OCI-LY7 (cell line): ENCODE measurements at regions of chr12 and their contacts with region 1.

Region 1: GRCh38 chr12:13079440-13079906 is 24.0 kb downstream of the GSG1 start:
- DNase-seq: no peak
- H3K4me3 ChIP-seq: no peak overlapping the region
- H3K27ac ChIP-seq: no peak overlapping the region
- H3K4me1 ChIP-seq: no peaks in the 10 kb centered on the region
- CTCF ChIP-seq: no peak

Region 2: DNA sequence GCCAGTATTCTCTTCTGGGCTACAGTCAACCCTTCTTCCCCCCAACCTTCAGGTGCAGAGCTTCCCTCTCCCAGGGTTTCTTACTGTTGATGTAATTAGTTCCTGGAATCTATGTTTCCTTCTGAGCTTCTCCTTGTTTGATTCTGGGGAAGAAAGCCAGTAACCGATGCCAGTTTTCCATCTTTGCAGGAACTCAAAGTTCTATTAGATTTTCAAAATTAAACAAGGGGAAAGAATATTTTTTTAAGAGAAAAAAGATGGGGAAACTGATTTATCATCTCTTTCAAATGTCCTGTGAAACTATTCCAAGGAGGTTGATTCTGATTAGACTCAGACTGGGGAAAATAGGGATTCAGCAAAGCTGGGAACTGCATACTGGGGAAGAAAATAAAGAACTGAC is 53.2 kb before region 1 on chr12:
- CTCF ChIA-PET with region 1: no interaction called
- POLR2A ChIA-PET with region 1: no interaction called
- intact Hi-C with region 1: no loop called
- DNase-seq: no peak
- H3K4me3 ChIP-seq: no peak overlapping the region
- H3K27ac ChIP-seq: no peak overlapping the region
- H3K4me1 ChIP-seq: no peaks in the 10 kb centered on the region
- CTCF ChIP-seq: no peak

Region 3: DNA sequence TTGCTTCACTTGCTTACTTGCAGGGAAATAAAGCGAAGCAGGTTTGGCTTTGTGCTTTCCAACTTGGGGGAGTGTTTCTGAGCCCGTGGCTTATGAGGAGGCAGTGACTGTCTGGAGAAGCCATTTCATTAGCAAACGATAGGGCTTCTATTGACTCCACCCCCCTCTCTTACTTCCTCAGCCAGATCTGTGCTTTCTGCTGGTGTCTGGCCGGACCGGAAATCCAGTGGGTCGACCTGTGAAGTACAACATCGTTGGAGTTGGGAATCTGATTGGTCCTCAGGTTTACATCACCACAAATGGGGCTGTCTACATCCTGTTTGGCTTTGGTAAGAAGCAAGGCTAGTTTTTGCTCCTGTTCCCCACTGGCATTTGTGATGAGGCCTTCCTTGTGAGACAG is 13.0 kb before region 1 on chr12:
- CTCF ChIA-PET with region 1: no interaction called
- POLR2A ChIA-PET with region 1: interaction called, 11 read pairs
- intact Hi-C with region 1: no loop called
- DNase-seq: no peak
- H3K4me3 ChIP-seq: no peak overlapping the region
- H3K27ac ChIP-seq: no peak overlapping the region
- H3K4me1 ChIP-seq: no peaks in the 10 kb centered on the region
- CTCF ChIP-seq: no peak

Region 4: DNA sequence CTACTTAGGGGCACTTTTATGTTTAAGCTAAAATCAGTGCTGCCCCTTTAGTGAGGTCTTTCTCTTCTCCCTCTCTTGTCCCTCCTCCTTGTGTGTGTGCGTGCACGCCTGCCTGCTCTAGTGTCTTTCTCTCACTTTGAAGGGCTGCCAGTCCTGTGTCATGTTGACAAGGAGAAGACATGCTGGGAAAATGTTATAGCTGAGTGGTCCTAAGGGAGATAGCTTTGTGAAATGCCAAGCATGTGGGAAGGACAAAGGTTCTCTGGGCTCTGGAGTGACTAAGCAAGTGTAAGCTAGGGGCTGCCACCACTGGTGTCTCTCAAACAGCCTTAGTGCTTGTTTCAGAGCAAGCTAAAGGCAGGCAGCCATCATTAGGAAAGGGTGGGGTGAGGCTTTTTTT is 225.5 kb after region 1 on chr12:
- CTCF ChIA-PET with region 1: no interaction called
- POLR2A ChIA-PET with region 1: no interaction called
- intact Hi-C with region 1: no loop called
- DNase-seq: no peak
- H3K4me3 ChIP-seq: no peak overlapping the region
- H3K27ac ChIP-seq: no peak overlapping the region
- H3K4me1 ChIP-seq: no peaks in the 10 kb centered on the region
- CTCF ChIP-seq: no peak